RWPE1 (cell line): ENCODE measurements at regions of chr12 and their contacts with region 1.

Region 1: DNA sequence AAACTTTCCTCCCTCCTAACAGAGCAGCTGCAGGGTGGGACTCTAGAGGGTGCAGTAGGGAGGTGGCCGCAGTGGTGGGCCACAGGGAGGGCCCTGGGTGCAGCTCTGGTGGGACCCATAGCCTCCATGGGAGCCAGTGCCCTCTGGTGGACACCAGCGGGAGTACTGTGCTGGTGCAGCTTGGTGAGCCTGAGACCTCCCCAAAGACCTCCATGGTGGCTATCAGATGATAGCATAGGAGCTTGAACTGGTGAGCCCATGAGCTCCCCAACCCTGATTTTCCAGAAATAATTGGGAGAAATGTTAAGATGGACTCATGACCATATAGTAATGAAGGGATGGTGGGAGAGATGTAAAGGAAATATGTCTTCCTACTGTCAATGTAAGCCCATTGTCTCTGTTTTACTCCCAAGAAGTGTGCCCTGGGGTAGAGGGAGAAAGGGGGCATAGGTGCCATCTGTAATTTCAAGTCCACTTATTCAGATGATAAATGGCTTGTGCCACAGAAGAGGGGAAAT is 98.7 kb downstream of the GAS2L3 start:
- DNase-seq: no peak
- H3K27ac ChIP-seq: no peak overlapping the region
- CTCF ChIP-seq: peak; percentile 42

Region 2: DNA sequence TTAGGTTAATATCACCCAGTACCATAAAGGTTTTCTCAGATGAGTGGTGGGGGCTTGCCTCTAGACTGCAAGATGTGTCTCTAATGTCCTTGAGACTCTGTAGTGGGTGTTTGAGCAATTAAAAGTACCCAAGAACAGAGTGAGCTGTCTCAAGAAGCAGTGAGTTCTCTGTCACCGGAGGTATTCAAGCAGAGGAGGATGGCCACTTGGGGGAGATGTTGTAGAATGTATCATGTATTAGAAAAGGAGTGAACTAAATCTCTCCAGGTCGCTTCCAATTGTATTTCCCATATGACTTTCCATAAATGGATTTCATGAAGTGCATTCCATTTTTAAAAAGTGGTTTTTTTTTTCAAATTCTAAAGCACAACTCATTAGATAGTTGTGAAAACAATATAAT is 280.3 kb before region 1 on chr12:
- CTCF ChIA-PET with region 1: no interaction called
- POLR2A ChIA-PET with region 1: no interaction called
- DNase-seq: no peak
- H3K27ac ChIP-seq: no peak overlapping the region
- CTCF ChIP-seq: no peak

Region 3: GRCh38 chr12:100733817-100734593 is 61.9 kb after region 1 on chr12:
- CTCF ChIA-PET with region 1: interaction called, 11 read pairs
- POLR2A ChIA-PET with region 1: no interaction called
- DNase-seq: no peak
- H3K27ac ChIP-seq: no peak overlapping the region
- CTCF ChIP-seq: peak; percentile 63

Region 4: GRCh38 chr12:100913872-100914592 is 241.9 kb after region 1 on chr12:
- CTCF ChIA-PET with region 1: no interaction called
- POLR2A ChIA-PET with region 1: no interaction called
- DNase-seq: no peak
- H3K27ac ChIP-seq: no peak overlapping the region
- CTCF ChIP-seq: no peak